ENCODE measurements at regions of chr16 and their contacts with region 1.

Region 1: DNA sequence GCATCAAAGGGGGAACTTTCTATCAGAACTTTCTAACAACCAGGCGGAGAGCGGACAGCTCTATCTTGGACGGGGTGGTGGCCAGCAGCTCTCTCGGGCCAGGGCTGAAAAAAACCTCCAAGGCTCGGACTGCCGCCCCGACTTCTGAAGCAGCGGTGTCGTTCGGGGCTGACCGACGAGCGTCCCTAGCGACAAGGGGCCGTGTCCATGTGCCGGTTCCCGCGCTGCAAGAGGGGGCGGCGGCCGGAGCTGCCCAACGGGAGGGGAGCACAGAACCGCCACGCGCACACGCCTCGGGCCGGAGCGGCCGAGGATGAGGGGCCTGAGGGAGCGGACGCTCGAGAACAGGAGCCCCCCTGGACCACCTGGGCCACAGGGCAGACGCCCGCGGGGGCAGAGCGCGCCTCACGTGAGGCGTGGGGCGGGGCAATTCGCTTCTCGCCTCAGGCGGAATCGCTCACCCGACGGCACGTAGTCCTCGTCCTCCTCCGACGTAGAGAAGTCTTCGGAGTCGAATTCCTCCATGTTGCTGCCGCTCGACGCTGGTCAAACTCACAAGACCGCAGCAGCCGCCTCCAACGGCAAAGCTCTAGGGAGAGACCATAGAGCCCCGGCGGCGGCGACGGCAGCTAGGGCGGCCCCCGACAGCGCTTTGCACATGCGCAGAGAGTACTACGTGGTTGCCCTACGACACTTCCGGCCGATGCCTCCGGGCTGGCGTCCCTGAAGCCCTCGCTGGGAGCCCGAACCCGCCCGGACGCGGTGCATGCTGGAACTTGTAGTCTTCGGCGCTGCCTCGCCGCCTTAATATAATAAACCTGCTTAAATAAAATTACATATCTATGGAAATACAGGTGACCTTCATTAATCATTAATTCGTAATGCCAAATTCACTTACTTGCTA is at the start of gene CFDP1:
- DNase-seq: peak; percentile 96
- H3K4me3 Mint-ChIP-seq: peak within 1 kb of the TSS; percentile 90
- H3K27ac Mint-ChIP-seq: peak within 1 kb of the TSS; percentile 87
- H3K4me1 Mint-ChIP-seq: peaks cover 32% of the 10 kb centered on the region
- H3K27me3 Mint-ChIP-seq: no peaks in the 10 kb centered on the region
- total RNA-seq, gene CFDP1: 37.6 to 41.3 TPM

Region 2: DNA sequence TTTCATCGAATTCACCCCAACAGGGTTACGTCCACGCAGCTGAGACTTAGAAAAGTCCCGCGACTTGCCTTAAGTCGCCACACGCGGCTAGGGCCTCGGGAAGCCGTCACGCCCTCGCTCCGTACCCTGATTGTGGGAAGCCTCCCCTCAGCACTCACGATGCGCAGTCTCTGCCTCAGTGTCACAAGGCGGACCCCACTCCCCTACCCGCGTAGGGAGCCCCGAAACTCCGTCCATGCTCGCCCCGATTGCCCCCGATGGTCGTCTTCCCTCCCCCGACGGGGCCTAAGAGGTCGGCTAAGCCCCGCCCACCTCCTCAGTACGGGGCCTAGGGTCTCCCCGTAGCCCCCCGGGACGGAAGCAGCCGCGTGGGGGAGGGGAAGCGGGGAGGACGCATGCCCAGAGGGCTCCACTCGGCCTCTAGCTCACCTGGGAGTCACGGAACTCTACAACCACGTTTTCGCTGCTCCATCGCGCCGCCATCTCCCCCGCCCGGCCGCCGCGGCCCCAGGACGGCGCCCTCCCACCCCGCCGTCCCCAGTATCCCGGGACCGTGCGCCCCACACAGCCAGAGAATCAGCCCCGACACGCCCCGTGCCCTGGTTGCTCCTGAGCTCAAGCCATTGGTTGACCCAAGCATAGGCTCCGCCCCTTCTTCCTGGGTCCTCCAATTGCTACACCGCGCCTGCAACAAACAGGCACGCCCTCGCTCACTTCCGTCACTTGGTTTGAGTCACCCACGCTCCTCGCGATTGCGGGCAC is 448.4 kb before region 1 on chr16 and contains the start of gene WDR59:
- CTCF ChIA-PET with region 1: no interaction called
- POLR2A ChIA-PET with region 1: no interaction called
- intact Hi-C with region 1: loop called (anchors 1 kb)
- DNase-seq: peak; percentile 99
- H3K4me3 Mint-ChIP-seq: peak within 1 kb of the TSS; percentile 86
- H3K27ac Mint-ChIP-seq: peak within 1 kb of the TSS; percentile 74
- H3K4me1 Mint-ChIP-seq: peaks cover 19% of the 10 kb centered on the region
- H3K27me3 Mint-ChIP-seq: no peaks in the 10 kb centered on the region
- total RNA-seq, gene WDR59: 63.5 to 65.7 TPM

Region 3: GRCh38 chr16:75519881-75520280 is 86.8 kb after region 1 on chr16:
- CTCF ChIA-PET with region 1: interaction called, 10 read pairs
- POLR2A ChIA-PET with region 1: interaction called, 3 read pairs
- intact Hi-C with region 1: loop called (anchors 1 kb)
- DNase-seq: no peak
- H3K4me3 Mint-ChIP-seq: no peak overlapping the region
- H3K27ac Mint-ChIP-seq: no peak overlapping the region
- H3K4me1 Mint-ChIP-seq: peaks cover 10% of the 10 kb centered on the region
- H3K27me3 Mint-ChIP-seq: no peaks in the 10 kb centered on the region

Region 4: DNA sequence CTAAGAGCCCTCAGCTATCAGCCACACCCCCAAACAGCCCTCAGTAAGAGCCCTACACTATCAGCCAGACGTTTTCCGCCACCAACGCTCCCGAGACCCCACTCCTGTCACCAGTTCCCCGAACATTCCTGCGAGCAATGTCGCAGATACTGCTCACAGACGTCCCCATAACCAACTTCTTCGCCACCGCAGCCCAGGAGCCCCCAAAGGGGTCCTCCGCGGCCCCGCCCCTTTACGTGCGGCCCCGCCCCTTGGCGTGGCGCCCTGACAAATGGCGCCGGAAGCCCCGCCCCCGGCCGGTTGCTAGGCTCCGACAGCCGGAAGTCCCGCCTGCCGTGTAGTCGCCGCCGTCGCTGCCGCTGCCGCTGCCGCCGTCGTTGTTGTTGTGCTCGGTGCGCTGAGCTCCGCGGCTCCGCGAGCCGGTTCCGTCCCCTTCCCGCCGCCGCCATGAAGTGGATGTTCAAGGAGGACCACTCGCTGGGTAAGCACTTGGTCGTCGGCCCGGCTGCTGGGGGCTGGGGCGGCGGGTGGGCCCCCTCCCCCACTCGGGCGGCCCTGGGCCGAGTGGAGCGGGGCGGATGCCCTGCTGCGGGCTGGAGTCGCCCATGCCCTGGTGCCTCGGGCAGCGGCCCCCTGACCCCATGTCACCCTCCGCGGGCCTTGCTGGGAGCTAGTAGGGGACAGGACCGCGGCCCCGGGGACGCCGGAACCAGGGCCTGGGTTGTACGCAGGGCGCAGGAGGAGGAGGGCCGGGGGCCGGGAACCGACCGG is 133.1 kb after region 1 on chr16 and contains the start of gene GABARAPL2:
- CTCF ChIA-PET with region 1: no interaction called
- POLR2A ChIA-PET with region 1: interaction called, 3 read pairs
- intact Hi-C with region 1: loop called (anchors 1 kb)
- DNase-seq: peak; percentile 92
- H3K4me3 Mint-ChIP-seq: peak within 1 kb of the TSS; percentile 94
- H3K27ac Mint-ChIP-seq: peak within 1 kb of the TSS; percentile 85
- H3K4me1 Mint-ChIP-seq: peaks cover 40% of the 10 kb centered on the region
- H3K27me3 Mint-ChIP-seq: peaks cover 7% of the 10 kb centered on the region
- total RNA-seq, gene GABARAPL2: 71.5 to 76.1 TPM

Region 5: DNA sequence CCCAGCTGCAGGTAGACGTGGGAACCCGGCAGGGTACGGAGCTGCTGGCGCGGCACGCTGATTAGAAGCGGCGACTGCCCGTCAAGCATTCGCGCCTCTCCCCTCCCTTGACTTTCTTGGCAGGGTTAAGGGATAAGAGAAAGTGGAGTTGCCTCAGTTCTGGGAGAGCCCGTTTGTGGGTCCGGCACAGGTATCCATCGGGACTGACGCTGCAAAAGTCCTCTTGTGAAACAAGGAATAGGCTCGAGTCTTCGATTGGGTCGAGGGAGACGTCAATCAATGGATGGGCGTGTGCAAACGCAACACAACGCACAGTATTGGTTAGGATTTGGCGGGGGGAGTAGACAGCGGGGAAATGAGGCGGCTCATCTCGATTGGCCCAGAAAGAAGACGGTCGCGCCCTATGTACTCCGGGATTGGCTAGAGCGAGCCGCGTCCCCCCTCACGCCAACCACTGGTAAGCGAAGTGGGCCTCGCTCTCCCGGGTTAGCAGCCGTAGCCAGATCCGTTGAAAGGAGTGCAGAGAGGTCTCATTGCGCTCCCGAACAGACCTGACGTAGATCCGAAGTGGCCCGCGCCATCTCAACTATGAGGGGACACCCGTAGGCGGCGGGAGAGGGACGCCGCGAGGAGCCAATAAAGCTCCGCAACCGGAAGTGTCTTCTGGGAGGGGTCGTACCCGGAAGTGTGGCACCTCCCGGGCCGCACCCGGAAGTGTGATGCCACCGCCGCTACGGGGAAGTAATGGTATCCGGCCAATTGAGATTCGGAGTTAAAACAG is 1757.6 kb after region 1 on chr16 and contains the start of gene MON1B:
- CTCF ChIA-PET with region 1: no interaction called
- POLR2A ChIA-PET with region 1: no interaction called
- intact Hi-C with region 1: loop called (anchors 1 kb)
- DNase-seq: peak; percentile 96
- H3K4me3 Mint-ChIP-seq: peak within 1 kb of the TSS; percentile 86
- H3K27ac Mint-ChIP-seq: peak within 1 kb of the TSS; percentile 98
- H3K4me1 Mint-ChIP-seq: peaks cover 33% of the 10 kb centered on the region
- H3K27me3 Mint-ChIP-seq: no peaks in the 10 kb centered on the region
- total RNA-seq, gene MON1B: 63.7 to 70.2 TPM